CD4-positive, alpha-beta memory T cell (primary cell): ENCODE measurements at regions of chrX and their contacts with region 1.

Region 1: DNA sequence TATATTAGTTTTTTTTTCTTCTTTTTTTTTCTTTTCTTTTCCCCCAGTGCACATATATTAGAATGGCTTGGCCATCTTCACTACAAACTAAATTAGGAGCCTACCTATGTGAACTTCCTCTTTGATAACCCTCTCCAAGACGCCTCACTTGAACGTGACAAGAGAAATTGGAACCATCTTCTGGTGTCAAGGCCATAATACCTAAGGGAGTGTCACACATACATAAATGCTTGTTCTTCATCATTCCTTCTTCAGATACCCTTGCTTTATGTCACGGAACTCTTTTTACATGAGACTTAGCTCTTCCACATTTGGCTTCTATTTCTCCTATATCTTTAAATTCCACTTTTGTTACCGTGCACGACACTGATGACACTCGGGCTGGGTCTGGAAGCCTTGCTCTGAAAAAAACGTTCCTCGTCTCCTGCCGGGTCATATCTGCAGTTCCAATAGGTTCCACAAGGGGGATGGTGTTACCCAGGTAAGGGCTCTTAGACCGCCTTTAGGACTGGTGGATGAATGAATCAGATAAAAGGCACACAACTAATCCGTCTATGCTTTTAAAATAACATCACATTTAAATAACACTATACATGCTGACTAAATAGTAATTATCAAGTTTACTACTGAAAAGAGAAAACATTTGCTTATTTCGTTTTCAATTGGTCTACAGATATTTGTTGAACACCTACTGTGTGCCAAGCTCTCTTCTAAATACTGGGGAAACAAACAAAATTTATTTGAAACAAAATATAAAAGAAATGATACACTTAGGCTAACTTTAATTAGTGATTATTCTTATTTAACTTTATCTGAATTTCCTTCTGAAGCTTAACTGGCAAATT is 19.9 kb downstream of the DGAT2L6 start:
- DNase-seq: peak; percentile 59 to 69 (median 64)
- H3K4me3 ChIP-seq: no peak overlapping the region
- H3K4me3 Mint-ChIP-seq: peak overlapping the region in 3 of 8 donors; percentile 2 to 43 (median 23)
- H3K27ac ChIP-seq: no peak overlapping the region
- H3K27ac Mint-ChIP-seq: peak overlapping the region in 1 of 7 donors; percentile 45
- H3K4me1 ChIP-seq: no peaks in the 10 kb centered on the region
- H3K4me1 Mint-ChIP-seq: peaks cover 1 to 6% (median 3%) of the 10 kb centered on the region in 4 donors
- H3K27me3 ChIP-seq: no peaks in the 10 kb centered on the region
- H3K27me3 Mint-ChIP-seq: peaks cover 1 to 5% of the 10 kb centered on the region in 2 donors

Region 2: DNA sequence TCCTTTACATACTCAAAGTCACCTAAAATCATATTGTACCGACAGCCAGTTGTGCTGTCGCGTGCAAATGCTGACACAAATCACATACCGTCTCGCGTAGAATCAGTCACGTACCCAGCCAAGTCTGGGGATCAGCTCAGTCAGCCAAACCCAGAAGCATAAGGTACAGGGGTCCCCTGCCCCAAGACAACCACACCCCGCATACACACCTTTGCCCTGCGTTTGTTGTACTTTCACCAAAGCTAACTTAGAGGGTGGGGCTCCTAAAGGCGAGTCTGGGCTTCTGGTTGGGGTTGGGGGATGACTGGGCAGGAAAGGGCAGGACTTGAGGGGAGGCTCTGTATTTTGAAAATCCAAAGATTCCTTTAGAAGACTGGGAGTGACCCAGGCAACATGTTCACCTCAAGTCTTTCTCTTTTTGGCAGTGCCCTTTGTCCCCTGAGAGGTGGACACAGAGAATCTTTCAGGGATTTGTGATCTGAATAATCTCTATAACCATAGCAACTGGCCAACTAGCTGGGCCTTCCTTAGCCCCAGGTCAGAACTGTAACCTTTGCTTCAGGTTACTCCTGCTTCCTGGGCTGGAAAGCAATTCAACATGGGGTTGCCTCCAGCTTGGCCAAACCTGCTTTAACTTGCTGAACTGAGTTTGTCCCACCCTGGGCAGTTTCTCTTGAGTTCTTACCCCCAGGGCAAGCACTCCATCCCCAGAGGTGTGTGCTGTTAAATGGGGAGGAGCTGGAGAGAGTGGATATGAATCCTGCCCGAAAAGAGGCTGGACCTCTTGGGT is 226.9 kb after region 1 on chrX:
- CTCF ChIA-PET with region 1: no interaction called
- POLR2A ChIA-PET with region 1: no interaction called
- intact Hi-C with region 1: no loop called
- DNase-seq: no peak
- H3K4me3 ChIP-seq: no peak overlapping the region
- H3K4me3 Mint-ChIP-seq: no peak overlapping the region
- H3K27ac ChIP-seq: no peak overlapping the region
- H3K27ac Mint-ChIP-seq: no peak overlapping the region
- H3K4me1 ChIP-seq: no peaks in the 10 kb centered on the region
- H3K4me1 Mint-ChIP-seq: no peaks in the 10 kb centered on the region
- H3K27me3 ChIP-seq: no peaks in the 10 kb centered on the region
- H3K27me3 Mint-ChIP-seq: peaks cover 0 to 2% of the 10 kb centered on the region in 2 donors

Region 3: GRCh38 chrX:70664726-70665125 is 467.5 kb after region 1 on chrX:
- CTCF ChIA-PET with region 1: interaction called, 3 read pairs
- POLR2A ChIA-PET with region 1: no interaction called
- intact Hi-C with region 1: loop called (anchors 1 kb)
- DNase-seq: peak in 4 of 5 donors; percentile 1 to 21 (median 11)
- H3K4me3 ChIP-seq: no peak overlapping the region
- H3K4me3 Mint-ChIP-seq: no peak overlapping the region
- H3K27ac ChIP-seq: no peak overlapping the region
- H3K27ac Mint-ChIP-seq: no peak overlapping the region
- H3K4me1 ChIP-seq: no peaks in the 10 kb centered on the region
- H3K4me1 Mint-ChIP-seq: no peaks in the 10 kb centered on the region
- H3K27me3 ChIP-seq: no peaks in the 10 kb centered on the region
- H3K27me3 Mint-ChIP-seq: no peaks in the 10 kb centered on the region